H1 (cell line): ENCODE measurements at regions of chr11 and their contacts with region 1.

Region 1: GRCh38 chr11:75734491-75735180 is 17.0 kb downstream of the MOGAT2 start:
- DNase-seq: no peak
- H3K4me3 ChIP-seq: no peak overlapping the region
- H3K27ac ChIP-seq: no peak overlapping the region
- H3K4me1 ChIP-seq: no peaks in the 10 kb centered on the region
- H3K27me3 ChIP-seq: no peaks in the 10 kb centered on the region; a peak in 1 of 7 replicates
- CTCF ChIP-seq: no peak
- EP300 ChIP-seq: no peak
- POLR2A ChIP-seq: no peak
- RAD21 ChIP-seq: no peak

Region 2: GRCh38 chr11:75525596-75526541 is 208.8 kb before region 1 on chr11 and contains the start of gene GDPD5:
- CTCF ChIA-PET with region 1: no interaction called
- POLR2A ChIA-PET with region 1: no interaction called
- DNase-seq: peak; percentile 54 to 87
- H3K4me3 ChIP-seq: peak within 1 kb of the TSS; percentile 47 to 77 (median 76)
- H3K27ac ChIP-seq: no peak within 1 kb of the TSS
- H3K4me1 ChIP-seq: peaks cover 0 to 7% (median 1%) of the 10 kb centered on the region in 4 experiments; a peak in 2 of 7 replicates
- H3K27me3 ChIP-seq: peaks cover 14 to 33% (median 19%) of the 10 kb centered on the region in 4 experiments; a peak in 6 of 7 replicates
- CTCF ChIP-seq: peak; percentile 58 to 65 (median 64)
- EP300 ChIP-seq: no peak
- POLR2A ChIP-seq: peak in 1 of 2 experiments; percentile 54; a peak in 1 of 3 replicates
- RAD21 ChIP-seq: peak; percentile 15 to 51; a peak in 3 of 4 replicates
- total RNA-seq, gene GDPD5: 8.1 and 8.6 TPM in 2 replicates

Region 3: GRCh38 chr11:75717608-75718418 is 16.8 kb before region 1 on chr11 and contains the start of gene MOGAT2:
- CTCF ChIA-PET with region 1: interaction called, 11 read pairs
- POLR2A ChIA-PET with region 1: no interaction called
- DNase-seq: no peak
- H3K4me3 ChIP-seq: no peak within 1 kb of the TSS
- H3K27ac ChIP-seq: no peak within 1 kb of the TSS
- H3K4me1 ChIP-seq: peaks cover 0 to 3% (median 0%) of the 10 kb centered on the region in 4 experiments; a peak in 2 of 7 replicates
- H3K27me3 ChIP-seq: peaks cover 0 to 15% (median 4%) of the 10 kb centered on the region in 4 experiments; a peak in 4 of 7 replicates
- CTCF ChIP-seq: no peak
- EP300 ChIP-seq: no peak
- POLR2A ChIP-seq: no peak
- RAD21 ChIP-seq: no peak
- total RNA-seq, gene MOGAT2: not detected in 2 replicates